ENCODE measurements at regions of chr2 and their contacts with region 1.

Region 1: DNA sequence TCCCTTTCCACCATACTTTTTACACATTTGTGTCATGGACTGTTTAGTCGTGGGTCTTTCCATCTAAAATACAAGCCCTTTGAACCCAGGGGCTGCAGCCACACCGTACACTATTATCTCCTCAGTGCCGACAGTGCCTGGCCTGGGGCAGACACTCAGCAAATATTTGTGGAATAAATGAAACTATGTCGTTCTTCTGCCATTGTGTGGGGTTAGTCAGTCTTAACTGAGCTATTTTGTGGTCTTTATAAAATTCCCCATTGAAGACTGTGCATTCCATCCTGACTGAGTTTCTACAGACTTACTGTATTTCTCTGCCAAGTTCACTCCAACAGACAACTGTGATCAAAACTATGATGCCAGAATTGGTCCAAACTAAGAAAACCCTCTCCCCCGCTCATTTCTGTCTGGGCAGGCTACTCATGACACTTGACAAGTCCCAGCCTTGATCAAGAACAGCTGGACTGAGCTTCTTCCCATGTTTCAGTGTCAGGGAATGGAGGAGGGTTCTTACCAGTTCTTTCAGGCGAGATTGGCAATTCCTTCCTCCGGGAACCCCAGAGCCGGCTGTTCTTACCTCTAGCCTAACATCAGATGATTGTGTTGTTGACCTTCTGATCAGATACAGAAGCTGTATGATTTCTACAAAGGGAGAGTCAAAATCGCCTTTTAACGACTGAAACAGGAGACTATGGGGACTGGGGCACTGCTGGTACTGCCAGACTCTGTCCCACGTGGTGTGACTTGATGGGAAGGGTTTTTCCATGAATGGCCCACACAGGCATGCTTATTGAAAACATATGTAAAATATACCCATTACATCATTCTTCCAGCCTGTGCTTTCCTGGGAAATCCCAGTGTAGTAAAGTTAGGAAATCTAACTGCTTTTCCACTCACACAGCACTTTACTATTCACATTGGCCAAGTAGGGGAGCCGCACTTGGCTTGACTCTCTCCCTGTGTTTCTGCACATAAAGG is 77.4 kb upstream of the NPAS2 start:
- DNase-seq: peak; percentile 82
- ATAC-seq: peak; percentile 84
- H3K4me3 ChIP-seq: peak overlapping the region in 2 of 3 experiments; percentile 0 to 6; a peak in 1 of 6 replicates
- H3K27ac ChIP-seq: no peak overlapping the region
- H3K4me1 ChIP-seq: peaks cover 48% of the 10 kb centered on the region
- H3K27me3 ChIP-seq: no peaks in the 10 kb centered on the region; a peak in 1 of 5 replicates
- CTCF ChIP-seq: 0 out of 2 replicates have a peak, but pooled peaks have one; percentile 5
- EP300 ChIP-seq: peak in 1 of 2 experiments; percentile 38; a peak in 1 of 4 replicates
- POLR2A ChIP-seq: no peak
- RAD21 ChIP-seq: no peak

Region 2: GRCh38 chr2:100818606-100819369 is 76.2 kb after region 1 on chr2:
- CTCF ChIA-PET with region 1: no interaction called
- POLR2A ChIA-PET with region 1: interaction called, 3 read pairs
- in situ Hi-C with region 1: no loop called
- intact Hi-C with region 1: loop called (anchors 2 kb)
- DNase-seq: peak; percentile 78
- ATAC-seq: peak; percentile 71
- H3K4me3 ChIP-seq: peak overlapping the region; percentile 76 to 96 (median 87)
- H3K27ac ChIP-seq: peak overlapping the region; percentile 65
- H3K4me1 ChIP-seq: peaks cover 71% of the 10 kb centered on the region
- H3K27me3 ChIP-seq: no peaks in the 10 kb centered on the region; a peak in 1 of 5 replicates
- CTCF ChIP-seq: peak; percentile 81
- EP300 ChIP-seq: no peak; a peak in 1 of 4 replicates
- POLR2A ChIP-seq: peak; percentile 69 to 70
- RAD21 ChIP-seq: peak; percentile 85

Measured in HepG2 (cell line).